AG04449 (cell line): ENCODE measurements at regions of chr17 and their contacts with region 1.

Region 1: GRCh38 chr17:49031965-49032928 is 35.1 kb downstream of the IGF2BP1 start:
- DNase-seq: no peak
- H3K4me3 ChIP-seq: no peak overlapping the region
- CTCF ChIP-seq: peak; percentile 73

Region 2: GRCh38 chr17:48804925-48805411 is 227.3 kb before region 1 on chr17:
- CTCF ChIA-PET with region 1: interaction called, 13 read pairs
- POLR2A ChIA-PET with region 1: no interaction called
- DNase-seq: no peak
- H3K4me3 ChIP-seq: no peak overlapping the region
- CTCF ChIP-seq: peak; percentile 91

Region 3: DNA sequence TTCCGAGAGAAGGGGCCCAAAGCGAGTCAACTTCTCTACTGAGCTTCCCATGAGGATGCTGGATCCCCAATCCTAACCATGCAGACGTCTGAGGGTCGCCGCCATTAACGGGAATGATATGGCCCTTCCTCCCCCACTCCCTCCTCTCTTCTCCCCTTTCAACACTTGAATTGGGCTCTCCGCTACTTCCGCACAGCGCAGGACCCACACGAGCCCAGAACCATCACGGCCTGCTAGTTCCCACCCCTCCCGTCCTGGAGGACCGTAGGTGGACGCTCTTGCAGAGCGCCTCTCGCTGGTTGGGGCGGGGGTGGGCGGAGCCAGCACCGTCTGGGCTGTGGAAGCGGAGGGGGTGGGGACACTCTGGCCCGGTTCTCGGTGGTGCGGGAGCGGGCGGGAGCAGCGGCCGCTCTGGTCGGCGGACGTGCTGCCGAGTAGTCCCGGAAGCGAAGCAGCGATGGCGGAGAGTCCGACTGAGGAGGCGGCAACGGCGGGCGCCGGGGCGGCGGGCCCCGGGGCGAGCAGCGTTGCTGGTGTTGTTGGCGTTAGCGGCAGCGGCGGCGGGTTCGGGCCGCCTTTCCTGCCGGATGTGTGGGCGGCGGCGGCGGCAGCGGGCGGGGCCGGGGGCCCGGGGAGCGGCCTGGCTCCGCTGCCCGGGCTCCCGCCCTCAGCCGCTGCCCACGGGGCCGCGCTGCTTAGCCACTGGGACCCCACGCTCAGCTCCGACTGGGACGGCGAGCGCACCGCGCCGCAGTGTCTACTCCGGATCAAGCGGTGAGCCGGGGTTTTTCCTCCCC is 124.0 kb before region 1 on chr17 and contains the start of gene UBE2Z:
- CTCF ChIA-PET with region 1: interaction called, 18 read pairs
- POLR2A ChIA-PET with region 1: interaction called, 3 read pairs
- DNase-seq: peak; percentile 71
- H3K4me3 ChIP-seq: peak within 1 kb of the TSS; percentile 74
- CTCF ChIP-seq: peak; percentile 15

Region 4: DNA sequence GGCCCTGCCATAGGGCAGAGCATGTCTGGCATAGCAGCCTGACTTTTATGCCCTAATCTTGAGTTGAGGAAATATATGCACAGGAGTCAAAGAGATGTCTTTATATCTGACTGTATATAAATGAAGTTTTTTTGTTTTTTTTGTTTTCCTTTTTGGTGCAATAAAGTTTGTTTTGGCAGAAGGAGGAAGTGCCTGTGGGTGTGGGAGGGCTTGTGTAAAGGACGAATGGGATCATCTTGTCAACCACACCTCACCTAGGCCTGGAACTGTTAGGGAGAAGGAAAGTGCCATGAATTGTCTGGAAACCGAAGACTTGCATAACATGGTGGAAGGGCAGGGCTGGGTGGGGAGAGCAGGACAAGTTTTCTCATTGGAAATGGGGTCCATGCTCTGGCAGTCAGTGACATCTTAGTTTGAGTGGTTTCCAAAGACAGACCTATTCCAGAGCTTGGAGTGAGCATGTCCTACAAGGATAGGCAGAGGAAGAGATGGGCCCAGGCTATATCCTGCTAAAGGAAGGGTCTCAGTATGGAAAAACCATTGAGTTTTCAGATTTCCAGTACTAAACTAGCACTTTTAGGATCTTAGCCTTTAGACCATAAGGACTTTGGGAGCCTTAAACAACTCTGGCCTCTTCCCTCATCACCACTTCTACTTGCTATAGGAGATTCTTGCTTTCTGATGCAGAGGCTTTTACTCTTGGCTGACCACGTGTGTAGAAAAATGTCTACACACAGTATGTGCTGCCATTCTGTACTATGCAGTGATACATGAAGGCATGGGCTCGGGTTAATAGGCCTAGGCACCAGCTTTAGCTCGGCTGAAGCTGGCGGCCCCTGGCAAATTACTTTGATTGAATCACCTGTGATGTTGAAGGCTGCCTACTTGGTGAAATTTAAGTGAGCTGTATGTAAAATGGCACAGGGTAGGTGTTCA is 103.1 kb before region 1 on chr17:
- CTCF ChIA-PET with region 1: interaction called, 29 read pairs
- POLR2A ChIA-PET with region 1: interaction called, 5 read pairs
- DNase-seq: no peak
- H3K4me3 ChIP-seq: no peak overlapping the region
- CTCF ChIP-seq: no peak

Region 5: DNA sequence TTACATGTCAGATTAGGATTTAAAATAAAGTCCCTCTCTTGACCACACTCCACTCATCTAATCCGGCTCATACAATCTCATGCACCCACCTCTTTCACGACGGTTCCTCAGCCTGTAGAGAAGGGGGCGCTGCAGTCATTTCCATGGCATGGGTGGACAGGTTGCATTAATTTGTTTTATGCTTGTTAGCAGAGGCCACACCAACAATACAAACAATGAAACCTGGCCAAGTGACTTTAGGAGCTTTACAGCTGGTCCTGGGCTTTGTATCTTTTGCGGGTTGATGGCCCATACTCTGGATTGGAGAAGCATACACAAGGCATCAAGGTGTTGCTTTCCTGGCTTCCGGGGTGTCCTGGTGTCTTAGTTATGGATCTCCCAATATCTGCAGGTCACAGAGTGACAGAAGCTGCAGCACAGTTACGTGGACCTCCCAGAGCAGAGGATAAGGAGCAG is 77.9 kb before region 1 on chr17:
- CTCF ChIA-PET with region 1: interaction called, 112 read pairs
- POLR2A ChIA-PET with region 1: no interaction called
- DNase-seq: no peak
- H3K4me3 ChIP-seq: no peak overlapping the region
- CTCF ChIP-seq: peak; percentile 72

Region 6: GRCh38 chr17:48997083-48997826 is 35.0 kb before region 1 on chr17 and contains the start of gene IGF2BP1:
- CTCF ChIA-PET with region 1: interaction called, 71 read pairs
- POLR2A ChIA-PET with region 1: interaction called, 3 read pairs
- DNase-seq: no peak
- H3K4me3 ChIP-seq: peak within 1 kb of the TSS; percentile 91
- CTCF ChIP-seq: no peak

Region 7: DNA sequence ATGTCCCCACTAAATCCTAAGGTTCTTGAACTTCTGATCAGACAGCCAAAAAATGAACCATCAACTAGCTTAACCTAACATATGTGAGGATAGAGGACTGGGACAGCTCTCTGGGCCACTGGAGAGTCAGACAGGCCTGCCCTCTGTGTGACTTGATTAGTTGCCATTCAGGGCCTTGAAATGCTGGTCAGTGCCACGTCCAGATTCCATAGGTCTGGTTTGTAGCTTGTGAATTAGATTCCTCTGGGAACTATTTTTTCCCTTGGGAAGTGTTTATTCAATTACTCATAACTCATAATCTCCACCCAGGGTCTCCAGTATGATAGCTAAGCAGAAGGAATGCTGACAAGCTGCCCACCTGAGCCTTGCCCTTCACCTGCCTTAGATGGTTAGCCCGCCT is 13.1 kb after region 1 on chr17:
- CTCF ChIA-PET with region 1: interaction called, 84 read pairs
- POLR2A ChIA-PET with region 1: no interaction called
- DNase-seq: no peak
- H3K4me3 ChIP-seq: no peak overlapping the region
- CTCF ChIP-seq: no peak